Naive thymus-derived CD4-positive, alpha-beta T cell (primary cell): ENCODE measurements at regions of chr5 and their contacts with region 1.

Region 1: GRCh38 chr5:179907570-179908324 is at the start of gene TBC1D9B:
- DNase-seq: peak; percentile 68 to 81 (median 73)
- ATAC-seq: peak; percentile 95
- H3K4me3 ChIP-seq: peak within 1 kb of the TSS; percentile 64
- H3K4me3 Mint-ChIP-seq: peak within 1 kb of the TSS; percentile 78 to 92 (median 90)
- H3K27ac ChIP-seq: peak within 1 kb of the TSS; percentile 56
- H3K27ac Mint-ChIP-seq: peak within 1 kb of the TSS; percentile 42 to 91 (median 85)
- H3K4me1 ChIP-seq: peaks cover 13 to 14% of the 10 kb centered on the region in 2 donors
- H3K4me1 Mint-ChIP-seq: peaks cover 7 to 40% (median 23%) of the 10 kb centered on the region in 7 donors
- H3K27me3 ChIP-seq: no peaks in the 10 kb centered on the region
- H3K27me3 Mint-ChIP-seq: no peaks in the 10 kb centered on the region
- total RNA-seq, gene TBC1D9B: 71.3 to 117 (median 86.9) TPM

Region 2: DNA sequence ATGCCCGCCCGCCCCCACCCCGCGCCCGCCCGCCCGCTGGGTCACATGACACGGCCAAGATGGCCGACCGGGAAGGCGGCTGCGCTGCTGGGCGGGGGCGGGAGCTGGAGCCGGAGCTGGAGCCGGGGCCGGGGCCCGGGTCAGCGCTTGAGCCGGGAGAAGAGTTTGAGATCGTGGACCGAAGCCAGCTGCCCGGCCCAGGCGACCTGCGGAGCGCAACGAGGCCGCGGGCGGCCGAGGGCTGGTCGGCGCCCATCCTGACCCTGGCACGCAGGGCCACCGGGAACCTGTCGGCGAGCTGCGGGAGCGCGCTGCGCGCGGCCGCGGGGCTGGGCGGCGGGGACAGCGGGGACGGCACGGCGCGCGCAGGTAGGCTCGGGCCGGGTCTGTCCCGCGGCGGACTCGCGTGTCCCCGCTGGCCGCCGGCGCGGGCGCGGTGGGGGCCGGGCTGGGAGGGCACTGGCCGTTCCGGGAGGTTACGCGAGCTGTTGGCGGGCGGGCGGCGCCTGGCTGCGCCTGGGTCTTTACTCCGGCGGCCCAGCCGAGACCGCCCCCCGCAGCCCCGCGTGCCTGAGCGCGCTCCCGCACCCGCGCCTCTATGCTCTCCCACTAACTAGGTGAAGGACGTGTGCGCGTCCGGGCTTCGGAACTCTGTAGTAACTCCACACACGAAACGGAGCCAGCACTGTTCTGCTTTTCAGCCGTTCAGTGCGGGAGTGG is 357.1 kb before region 1 on chr5 and contains the start of gene RUFY1:
- CTCF ChIA-PET with region 1: no interaction called
- POLR2A ChIA-PET with region 1: no interaction called
- intact Hi-C with region 1: loop called (anchors 5 kb)
- DNase-seq: peak; percentile 74 to 92 (median 87)
- ATAC-seq: peak; percentile 90
- H3K4me3 ChIP-seq: peak within 1 kb of the TSS; percentile 84
- H3K4me3 Mint-ChIP-seq: peak within 1 kb of the TSS; percentile 94 to 99 (median 96)
- H3K27ac ChIP-seq: peak within 1 kb of the TSS; percentile 87
- H3K27ac Mint-ChIP-seq: peak within 1 kb of the TSS; percentile 91 to 99 (median 98)
- H3K4me1 ChIP-seq: peaks cover 12 to 15% of the 10 kb centered on the region in 2 donors
- H3K4me1 Mint-ChIP-seq: peaks cover 10 to 49% (median 35%) of the 10 kb centered on the region in 7 donors
- H3K27me3 ChIP-seq: no peaks in the 10 kb centered on the region
- H3K27me3 Mint-ChIP-seq: peaks cover 0 to 4% (median 0%) of the 10 kb centered on the region in 5 donors
- total RNA-seq, gene RUFY1: 31.8 to 63.0 (median 52.3) TPM

Region 3: DNA sequence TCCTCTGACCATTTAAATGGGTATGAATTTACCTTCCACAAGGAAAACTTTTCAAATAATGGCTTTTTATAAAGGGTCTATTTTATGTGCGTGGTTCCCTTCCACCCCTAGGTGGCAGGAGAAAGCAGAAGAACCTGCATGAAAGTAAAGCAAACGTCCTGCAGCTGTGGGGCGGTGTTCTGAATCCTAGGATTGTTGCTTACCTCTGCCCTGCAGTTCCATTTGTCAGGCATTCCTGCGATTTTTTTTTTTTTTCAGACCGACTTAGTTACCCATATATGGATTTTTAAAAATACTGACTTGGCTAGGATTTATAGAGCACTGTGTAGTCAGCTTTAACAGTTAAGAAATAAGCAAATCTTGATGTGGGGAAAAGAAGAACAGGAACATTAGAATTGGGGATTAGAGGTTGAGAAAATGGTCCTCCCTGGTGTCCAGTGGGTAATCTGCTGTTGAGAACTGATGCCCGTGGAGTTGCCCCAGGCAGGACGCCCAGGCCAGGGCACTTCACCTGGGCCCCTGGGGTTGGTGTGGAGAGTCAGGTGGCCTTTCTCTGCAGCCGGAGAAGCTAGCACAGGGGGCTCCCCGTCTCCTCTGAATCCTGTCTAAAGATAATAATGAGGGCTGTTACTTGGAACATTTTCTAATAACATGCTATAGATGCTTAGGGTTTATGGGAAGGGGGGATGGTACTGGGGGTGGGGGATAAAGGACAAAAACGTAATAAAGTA is 144.4 kb before region 1 on chr5:
- CTCF ChIA-PET with region 1: interaction called, 3 read pairs
- POLR2A ChIA-PET with region 1: no interaction called
- intact Hi-C with region 1: loop called (anchors 1 to 2 kb)
- DNase-seq: peak in 8 of 9 donors; percentile 32 to 64 (median 51)
- ATAC-seq: peak; percentile 75
- H3K4me3 ChIP-seq: no peak overlapping the region
- H3K4me3 Mint-ChIP-seq: peak overlapping the region in 2 of 10 donors; percentile 12 to 29
- H3K27ac ChIP-seq: no peak overlapping the region
- H3K27ac Mint-ChIP-seq: peak overlapping the region in 6 of 9 donors; percentile 10 to 90 (median 49)
- H3K4me1 ChIP-seq: peaks cover 7 to 13% of the 10 kb centered on the region in 2 donors
- H3K4me1 Mint-ChIP-seq: peaks cover 48 to 70% (median 57%) of the 10 kb centered on the region in 7 donors
- H3K27me3 ChIP-seq: no peaks in the 10 kb centered on the region
- H3K27me3 Mint-ChIP-seq: no peaks in the 10 kb centered on the region

Region 4: GRCh38 chr5:179821581-179822432 is 85.9 kb before region 1 on chr5:
- CTCF ChIA-PET with region 1: no interaction called
- POLR2A ChIA-PET with region 1: interaction called, 3 read pairs
- intact Hi-C with region 1: loop called (anchors 1 to 5 kb)
- DNase-seq: peak; percentile 72 to 88 (median 85)
- ATAC-seq: peak; percentile 73
- H3K4me3 ChIP-seq: peak overlapping the region; percentile 87
- H3K4me3 Mint-ChIP-seq: peak overlapping the region; percentile 88 to 98 (median 95)
- H3K27ac ChIP-seq: peak overlapping the region; percentile 96
- H3K27ac Mint-ChIP-seq: peak overlapping the region; percentile 79 to 97 (median 94)
- H3K4me1 ChIP-seq: peaks cover 31 to 36% of the 10 kb centered on the region in 2 donors
- H3K4me1 Mint-ChIP-seq: peaks cover 30 to 62% (median 45%) of the 10 kb centered on the region in 7 donors
- H3K27me3 ChIP-seq: no peaks in the 10 kb centered on the region
- H3K27me3 Mint-ChIP-seq: no peaks in the 10 kb centered on the region

Region 5: DNA sequence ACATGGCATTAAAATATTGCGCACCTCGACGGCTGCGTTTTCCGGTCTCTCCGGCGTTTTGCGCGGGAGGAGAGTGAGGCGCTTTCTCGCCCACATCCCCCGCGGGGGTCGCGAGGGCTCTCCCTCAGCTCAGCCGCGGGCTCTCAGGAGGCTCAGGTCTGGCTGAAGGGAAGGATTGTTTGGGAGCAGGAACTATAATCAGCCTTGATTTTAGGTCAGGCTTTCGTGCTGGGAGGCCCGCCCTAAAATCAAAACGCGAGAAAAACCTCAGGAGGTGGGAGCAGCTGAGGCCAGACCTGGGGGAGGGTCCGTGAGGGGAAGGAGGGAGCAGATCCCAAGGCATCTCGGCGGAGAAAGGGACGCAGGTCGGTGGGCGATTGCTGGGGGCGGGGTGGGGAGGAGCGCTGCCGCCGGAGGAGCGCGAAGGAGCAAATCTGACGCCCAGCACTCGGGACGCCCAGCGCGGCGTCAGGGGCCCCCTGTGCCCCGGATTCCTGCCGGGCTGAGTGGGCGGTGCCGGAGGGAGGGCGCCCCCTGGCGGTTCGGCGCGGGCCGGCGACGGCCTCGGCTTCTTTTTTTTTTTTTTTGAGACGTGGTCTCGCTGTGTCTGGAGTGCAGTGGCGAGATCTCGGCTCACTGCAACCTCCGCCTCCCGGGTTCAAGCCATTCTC is 182.5 kb after region 1 on chr5:
- CTCF ChIA-PET with region 1: interaction called, 3 read pairs
- POLR2A ChIA-PET with region 1: interaction called, 4 read pairs
- intact Hi-C with region 1: loop called in 1 of 2 experiments (anchors 1 kb)
- DNase-seq: peak; percentile 71 to 90 (median 85)
- ATAC-seq: peak; percentile 90
- H3K4me3 ChIP-seq: peak overlapping the region; percentile 81
- H3K4me3 Mint-ChIP-seq: peak overlapping the region; percentile 82 to 92 (median 88)
- H3K27ac ChIP-seq: peak overlapping the region; percentile 63
- H3K27ac Mint-ChIP-seq: peak overlapping the region in 8 of 9 donors; percentile 48 to 95 (median 84)
- H3K4me1 ChIP-seq: peaks cover 6% of the 10 kb centered on the region in 2 donors
- H3K4me1 Mint-ChIP-seq: peaks cover 6 to 34% (median 27%) of the 10 kb centered on the region in 7 donors
- H3K27me3 ChIP-seq: no peaks in the 10 kb centered on the region
- H3K27me3 Mint-ChIP-seq: peaks cover 0 to 10% (median 0%) of the 10 kb centered on the region in 5 donors